Dorsolateral prefrontal cortex (tissue), 120 donors: ENCODE measurements at regions of chr6 and their contacts with region 1.

Region 1: GRCh38 chr6:134822920-134823709 is 126.8 kb downstream of the ALDH8A1 start:
- DNase-seq: peak in 6 of 10 donors; percentile 10 to 50 (median 46)
- H3K4me3 ChIP-seq: peak overlapping the region in 20 of 59 donors; percentile 5 to 40 (median 20)
- H3K27ac ChIP-seq: peak overlapping the region in 40 of 59 donors; percentile 1 to 81 (median 44)
- H3K27me3 ChIP-seq: no peaks in the 10 kb centered on the region
- CTCF ChIP-seq: peak; percentile 70 to 98 (median 93)

Region 2: DNA sequence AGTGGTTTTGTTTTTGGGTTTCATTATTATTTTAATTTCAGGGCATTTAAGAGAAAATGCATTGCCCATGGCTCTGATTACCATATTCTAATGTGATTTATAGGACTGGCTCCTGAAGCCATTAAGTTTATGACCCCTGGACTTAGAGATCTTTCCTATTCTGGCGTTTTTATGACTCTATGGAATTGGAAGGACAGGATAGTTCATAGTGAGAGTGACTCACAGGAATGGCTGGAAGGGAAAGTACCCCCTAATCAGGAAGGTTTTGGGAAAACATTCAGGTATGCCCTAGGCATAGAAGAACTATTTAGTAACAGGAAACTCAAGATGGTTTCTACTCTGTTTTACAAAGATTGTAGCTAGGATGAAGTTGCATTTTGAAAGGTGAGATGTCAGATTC is 662.1 kb before region 1 on chr6:
- intact Hi-C with region 1: loop called in 1 of 2 experiments (anchors 5 kb)
- DNase-seq: no peak
- H3K4me3 ChIP-seq: no peak overlapping the region
- H3K27ac ChIP-seq: peak overlapping the region in 1 of 59 donors; percentile 7
- H3K27me3 ChIP-seq: no peaks in the 10 kb centered on the region
- CTCF ChIP-seq: no peak

Region 3: DNA sequence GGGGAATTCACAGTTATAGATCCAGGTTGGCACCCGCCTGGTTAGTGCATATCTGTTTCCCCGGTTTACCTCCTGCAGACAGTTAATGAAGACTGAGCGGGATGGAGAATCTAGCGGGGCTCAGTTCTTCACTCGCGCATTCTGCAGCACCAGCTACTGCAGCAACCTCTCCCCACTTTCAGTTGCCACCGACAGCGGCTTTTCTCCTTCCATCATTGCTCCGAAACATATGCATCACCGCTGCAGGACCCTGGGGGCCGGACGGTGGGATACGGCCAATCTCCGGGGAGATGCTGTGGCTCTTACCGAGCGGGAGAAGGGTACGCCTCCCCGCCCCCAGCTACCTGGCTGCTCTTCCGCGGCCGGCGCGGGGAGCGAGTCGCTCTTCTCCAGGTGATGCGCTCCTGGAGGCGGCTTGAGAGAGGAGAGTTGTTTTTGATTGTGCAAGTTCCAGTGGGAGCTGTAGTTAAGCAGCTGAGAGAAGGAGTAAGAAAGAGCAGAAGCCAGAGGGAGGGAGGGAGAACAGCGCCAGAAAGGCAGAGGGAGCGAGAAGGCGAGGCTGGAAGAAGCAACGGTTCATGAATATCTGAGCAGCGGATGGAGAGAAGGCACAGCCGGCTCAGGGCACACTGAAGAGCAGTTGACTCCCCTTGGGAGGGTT is 505.5 kb before region 1 on chr6 and contains the start of gene SGK1:
- intact Hi-C with region 1: loop called in 1 of 2 experiments (anchors 10 kb)
- DNase-seq: peak in 9 of 10 donors; percentile 41 to 70 (median 67)
- H3K4me3 ChIP-seq: peak within 1 kb of the TSS; percentile 57 to 95 (median 79)
- H3K27ac ChIP-seq: peak within 1 kb of the TSS; percentile 87 to 99 (median 96)
- H3K27me3 ChIP-seq: no peaks in the 10 kb centered on the region
- CTCF ChIP-seq: peak in 23 of 56 donors; percentile 5 to 45 (median 23)
- total RNA-seq, gene SGK1: 31.4 to 701 (median 120) TPM

Region 4: DNA sequence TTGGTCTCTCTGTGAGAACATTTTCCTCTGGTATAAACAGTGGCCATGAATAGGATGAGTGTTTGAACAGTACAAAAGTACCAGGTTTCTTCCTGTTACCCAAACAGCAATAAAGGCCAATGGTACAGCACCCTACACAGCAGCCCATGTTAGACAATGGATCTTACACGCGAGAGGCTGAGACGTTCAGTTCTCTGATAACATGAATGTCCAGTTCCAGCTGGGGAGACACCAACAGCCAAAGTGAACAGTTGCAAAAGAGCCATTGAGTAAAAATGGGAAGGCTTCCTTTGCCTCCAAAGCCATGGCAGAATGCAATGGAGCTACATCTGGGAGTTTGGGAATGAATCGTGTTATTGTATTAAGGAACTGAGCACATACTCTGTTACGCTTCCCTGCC is 258.4 kb before region 1 on chr6:
- intact Hi-C with region 1: loop called (anchors 5 kb)
- DNase-seq: peak; percentile 15 to 93 (median 75)
- H3K4me3 ChIP-seq: peak overlapping the region in 1 of 59 donors; percentile 30
- H3K27ac ChIP-seq: peak overlapping the region; percentile 49 to 100 (median 97)
- H3K27me3 ChIP-seq: no peaks in the 10 kb centered on the region
- CTCF ChIP-seq: peak in 3 of 56 donors; percentile 10 to 26 (median 19)

Region 5: DNA sequence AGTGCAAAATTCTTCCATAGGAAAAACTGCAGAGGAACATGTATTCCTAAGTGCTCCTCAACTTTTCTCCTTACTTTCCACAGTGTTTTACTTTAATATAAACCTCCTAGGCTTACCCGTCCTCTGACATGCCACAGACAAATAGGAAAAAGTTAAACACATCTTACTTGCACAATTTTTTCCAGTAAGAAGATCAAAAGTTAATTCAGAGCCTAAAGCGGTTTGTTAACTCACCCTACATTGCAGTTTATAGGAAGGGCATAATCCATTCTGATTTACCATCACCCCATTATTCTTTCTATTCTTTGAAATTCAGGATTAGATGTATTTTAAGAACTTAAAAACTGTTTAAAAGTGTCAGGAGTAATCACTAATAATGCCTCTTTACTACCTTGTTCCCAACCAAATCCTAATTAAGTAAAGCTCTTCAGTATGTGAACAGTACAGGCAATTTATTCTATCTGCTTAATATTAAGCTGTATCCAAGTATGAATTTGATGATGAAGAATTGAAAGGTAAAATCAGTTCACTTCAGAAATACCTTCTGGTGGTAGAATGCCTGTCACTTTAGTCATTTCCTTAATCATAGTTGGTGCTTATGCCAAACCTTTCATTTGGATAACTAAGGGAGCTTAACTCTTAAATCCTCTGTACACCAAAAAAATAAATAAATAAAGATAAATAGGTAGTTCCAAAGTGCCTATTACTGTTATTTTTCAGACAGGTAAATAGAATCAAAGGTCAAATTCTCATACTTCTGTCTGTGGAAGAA is 165.2 kb before region 1 on chr6:
- intact Hi-C with region 1: loop called in 1 of 2 experiments (anchors 10 kb)
- DNase-seq: no peak
- H3K4me3 ChIP-seq: no peak overlapping the region
- H3K27ac ChIP-seq: no peak overlapping the region
- H3K27me3 ChIP-seq: no peaks in the 10 kb centered on the region
- CTCF ChIP-seq: no peak

Region 6: DNA sequence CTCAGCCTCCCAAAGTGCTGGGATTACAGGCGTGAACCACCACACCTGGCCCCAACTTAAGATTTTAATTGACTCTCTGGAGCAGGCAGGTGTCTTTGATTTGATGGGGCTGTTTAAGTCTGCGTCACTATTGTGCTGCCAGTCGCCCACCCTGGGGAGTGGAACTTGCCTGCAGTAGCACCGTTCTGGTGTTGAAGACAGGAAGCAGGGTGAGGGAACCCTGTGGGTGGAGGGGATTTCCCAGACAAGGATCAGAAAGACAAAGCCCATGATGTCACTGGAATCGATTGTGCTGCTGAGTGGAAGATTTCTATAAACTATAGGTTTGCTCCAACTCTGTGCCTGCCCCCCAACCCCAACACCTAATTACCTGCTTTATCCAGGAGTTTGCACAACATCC is 115.8 kb after region 1 on chr6:
- intact Hi-C with region 1: loop called in 1 of 2 experiments (anchors 5 kb)
- DNase-seq: no peak
- H3K4me3 ChIP-seq: no peak overlapping the region
- H3K27ac ChIP-seq: no peak overlapping the region
- H3K27me3 ChIP-seq: no peaks in the 10 kb centered on the region
- CTCF ChIP-seq: no peak